GM12878 (cell line): ENCODE measurements at regions of chrX and their contacts with region 1.

Region 1: GRCh38 chrX:1537035-1537715 is at the start of gene P2RY8:
- DNase-seq: peak; percentile 75
- ATAC-seq: peak; percentile 69
- H3K4me3 ChIP-seq: peak within 1 kb of the TSS; percentile 92
- H3K27ac ChIP-seq: peak within 1 kb of the TSS; percentile 97
- H3K4me1 ChIP-seq: peaks cover 4% of the 10 kb centered on the region; the same call in 1 of the 2 replicates
- H3K27me3 ChIP-seq: no peaks in the 10 kb centered on the region
- CTCF ChIP-seq: peak; percentile 16 to 73 (median 48); a peak in 4 of 6 replicates
- EP300 ChIP-seq: no peak
- POLR2A ChIP-seq: peak; percentile 90
- RAD21 ChIP-seq: peak; percentile 79
- polyA plus RNA-seq, gene P2RY8: 2.0 to 4.0 TPM

Region 2: DNA sequence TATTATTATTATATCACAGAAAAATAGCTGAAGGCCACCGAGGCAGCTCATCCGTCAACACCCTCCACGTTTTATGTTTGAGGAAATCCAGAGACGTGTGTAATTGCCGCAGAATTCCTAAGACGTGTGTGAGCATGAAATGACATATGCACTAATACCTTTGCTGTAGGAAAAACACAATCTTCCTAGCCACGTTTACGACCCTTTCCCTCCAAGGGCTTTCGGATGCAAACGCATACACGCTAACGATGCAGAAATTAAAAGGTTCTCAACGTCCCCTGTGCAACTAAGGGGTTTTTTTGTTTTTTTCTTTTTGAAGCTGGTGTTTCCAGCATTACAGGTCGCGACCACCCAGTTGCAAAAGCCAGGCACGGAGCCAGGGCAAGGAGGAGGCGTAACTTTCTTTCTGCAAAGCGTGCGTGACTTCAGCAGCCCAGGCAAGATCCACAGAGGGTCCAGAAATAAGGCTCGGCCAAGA is 358.6 kb before region 1 on chrX:
- CTCF ChIA-PET with region 1: no interaction called
- POLR2A ChIA-PET with region 1: no interaction called
- RAD21 ChIA-PET with region 1: no interaction called
- SMC1A ChIA-PET with region 1: no interaction called
- in situ Hi-C with region 1: no loop called
- intact Hi-C with region 1: no loop called
- DNase-seq: no peak
- ATAC-seq: no peak
- H3K4me3 ChIP-seq: no peak overlapping the region
- H3K27ac ChIP-seq: no peak overlapping the region
- H3K4me1 ChIP-seq: no peaks in the 10 kb centered on the region
- H3K27me3 ChIP-seq: no peaks in the 10 kb centered on the region
- CTCF ChIP-seq: no peak
- EP300 ChIP-seq: no peak
- POLR2A ChIP-seq: no peak
- RAD21 ChIP-seq: no peak

Region 3: GRCh38 chrX:1468250-1468772 is 68.9 kb before region 1 on chrX:
- CTCF ChIA-PET with region 1: no interaction called
- POLR2A ChIA-PET with region 1: no interaction called
- RAD21 ChIA-PET with region 1: no interaction called
- SMC1A ChIA-PET with region 1: no interaction called
- in situ Hi-C with region 1: no loop called
- intact Hi-C with region 1: loop called (anchors 1 kb)
- DNase-seq: peak; percentile 83
- ATAC-seq: peak; percentile 77
- H3K4me3 ChIP-seq: no peak overlapping the region
- H3K27ac ChIP-seq: peak overlapping the region; percentile 82
- H3K4me1 ChIP-seq: peaks cover 43% of the 10 kb centered on the region
- H3K27me3 ChIP-seq: no peaks in the 10 kb centered on the region
- CTCF ChIP-seq: peak; percentile 24 to 60 (median 32); a peak in 4 of 6 replicates
- EP300 ChIP-seq: peak in 1 of 2 experiments; percentile 66; a peak in 2 of 4 replicates
- POLR2A ChIP-seq: 0 out of 2 replicates have a peak, but pooled peaks have one; percentile 40
- RAD21 ChIP-seq: peak; percentile 28

Region 4: DNA sequence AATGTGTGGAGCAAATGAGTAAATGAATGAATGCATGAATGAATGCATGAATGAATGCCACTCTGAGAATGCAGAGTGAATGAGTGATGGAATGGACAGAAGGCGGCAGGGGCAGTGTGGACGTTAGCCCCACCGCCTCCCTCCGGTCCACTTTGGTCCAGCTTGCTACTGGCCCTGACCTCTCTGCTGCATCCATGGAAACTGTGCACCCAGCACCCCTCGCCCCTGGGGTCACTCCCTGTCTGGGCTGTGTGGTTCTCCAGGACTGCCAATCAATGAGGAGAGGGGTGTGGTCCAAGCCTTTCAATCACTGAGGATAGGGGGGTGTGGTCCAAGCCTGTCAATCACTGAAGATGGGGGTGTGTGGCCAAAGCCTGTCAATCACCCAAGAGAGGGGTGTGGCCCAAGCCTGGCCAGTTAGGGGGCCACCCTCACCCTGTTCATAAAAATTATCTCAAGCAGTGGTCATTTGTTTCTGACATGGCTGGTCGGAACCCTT is 45.3 kb before region 1 on chrX:
- CTCF ChIA-PET with region 1: no interaction called
- POLR2A ChIA-PET with region 1: no interaction called
- RAD21 ChIA-PET with region 1: no interaction called
- SMC1A ChIA-PET with region 1: no interaction called
- in situ Hi-C with region 1: no loop called
- intact Hi-C with region 1: loop called (anchors 2 kb)
- DNase-seq: peak; percentile 87
- ATAC-seq: peak; percentile 81
- H3K4me3 ChIP-seq: no peak overlapping the region; the same call in 1 of the 2 replicates
- H3K27ac ChIP-seq: peak overlapping the region; percentile 44
- H3K4me1 ChIP-seq: peaks cover 34% of the 10 kb centered on the region
- H3K27me3 ChIP-seq: no peaks in the 10 kb centered on the region
- CTCF ChIP-seq: no peak
- EP300 ChIP-seq: no peak
- POLR2A ChIP-seq: 0 out of 2 replicates have a peak, but pooled peaks have one; percentile 46
- RAD21 ChIP-seq: no peak

Region 5: GRCh38 chrX:1521459-1521956 is 15.7 kb before region 1 on chrX:
- CTCF ChIA-PET with region 1: no interaction called
- POLR2A ChIA-PET with region 1: no interaction called
- RAD21 ChIA-PET with region 1: no interaction called
- SMC1A ChIA-PET with region 1: no interaction called
- in situ Hi-C with region 1: no loop called
- intact Hi-C with region 1: loop called (anchors 1 kb)
- DNase-seq: peak; percentile 99
- ATAC-seq: peak; percentile 92
- H3K4me3 ChIP-seq: peak overlapping the region; percentile 50; the same call in 1 of the 2 replicates
- H3K27ac ChIP-seq: peak overlapping the region; percentile 91
- H3K4me1 ChIP-seq: peaks cover 44% of the 10 kb centered on the region
- H3K27me3 ChIP-seq: no peaks in the 10 kb centered on the region
- CTCF ChIP-seq: no peak
- EP300 ChIP-seq: peak; percentile 98 to 99
- POLR2A ChIP-seq: peak; percentile 48
- RAD21 ChIP-seq: peak; percentile 33; the same call in 1 of the 2 replicates

Region 6: GRCh38 chrX:1554469-1555210 is 17.5 kb after region 1 on chrX:
- CTCF ChIA-PET with region 1: no interaction called
- POLR2A ChIA-PET with region 1: no interaction called
- RAD21 ChIA-PET with region 1: no interaction called
- SMC1A ChIA-PET with region 1: no interaction called
- in situ Hi-C with region 1: no loop called
- intact Hi-C with region 1: no loop called
- DNase-seq: no peak
- ATAC-seq: peak; percentile 86
- H3K4me3 ChIP-seq: peak overlapping the region; percentile 32; the same call in 1 of the 2 replicates
- H3K27ac ChIP-seq: peak overlapping the region; percentile 4; the same call in 1 of the 2 replicates
- H3K4me1 ChIP-seq: peaks cover 7% of the 10 kb centered on the region
- H3K27me3 ChIP-seq: no peaks in the 10 kb centered on the region
- CTCF ChIP-seq: no peak
- EP300 ChIP-seq: no peak
- POLR2A ChIP-seq: no peak
- RAD21 ChIP-seq: no peak

Region 7: GRCh38 chrX:1591102-1591900 is 54.1 kb after region 1 on chrX and contains the start of gene AKAP17A:
- CTCF ChIA-PET with region 1: no interaction called
- POLR2A ChIA-PET with region 1: no interaction called
- RAD21 ChIA-PET with region 1: no interaction called
- SMC1A ChIA-PET with region 1: no interaction called
- in situ Hi-C with region 1: no loop called
- intact Hi-C with region 1: loop called (anchors 2 kb)
- DNase-seq: peak; percentile 83
- ATAC-seq: peak; percentile 84
- H3K4me3 ChIP-seq: peak within 1 kb of the TSS; percentile 98
- H3K27ac ChIP-seq: peak within 1 kb of the TSS; percentile 85
- H3K4me1 ChIP-seq: peaks cover 31% of the 10 kb centered on the region
- H3K27me3 ChIP-seq: no peaks in the 10 kb centered on the region
- CTCF ChIP-seq: peak in 2 of 3 experiments; percentile 3 to 25; a peak in 1 of 6 replicates
- EP300 ChIP-seq: no peak
- POLR2A ChIP-seq: peak; percentile 90
- RAD21 ChIP-seq: no peak
- polyA plus RNA-seq, gene AKAP17A: 3.0 to 5.6 TPM